Right lobe of liver (tissue), 6 donors: ENCODE measurements at regions of chr7 and their contacts with region 1.

Region 1: GRCh38 chr7:37510043-37510634 is 61.5 kb upstream of the ELMO1 start:
- DNase-seq: no peak
- ATAC-seq: peak; percentile 75 to 82 (median 79)
- H3K4me3 ChIP-seq: no peak overlapping the region
- H3K27ac ChIP-seq: no peak overlapping the region
- H3K4me1 ChIP-seq: no peaks in the 10 kb centered on the region
- H3K27me3 ChIP-seq: no peaks in the 10 kb centered on the region
- CTCF ChIP-seq: peak; percentile 68 to 80 (median 78)
- POLR2A ChIP-seq: no peak

Region 2: GRCh38 chr7:37131855-37132254 is 378.3 kb before region 1 on chr7:
- intact Hi-C with region 1: no loop called
- DNase-seq: no peak
- ATAC-seq: peak in 1 of 4 donors; percentile 69
- H3K4me3 ChIP-seq: no peak overlapping the region
- H3K27ac ChIP-seq: no peak overlapping the region
- H3K4me1 ChIP-seq: peaks cover 0 to 11% (median 4%) of the 10 kb centered on the region in 4 donors
- H3K27me3 ChIP-seq: no peaks in the 10 kb centered on the region
- CTCF ChIP-seq: no peak
- POLR2A ChIP-seq: no peak

Region 3: GRCh38 chr7:37284805-37285231 is 225.3 kb before region 1 on chr7:
- intact Hi-C with region 1: loop called in 1 of 2 experiments (anchors 10 kb)
- DNase-seq: peak; percentile 47 to 73 (median 62)
- ATAC-seq: peak; percentile 80 to 89 (median 84)
- H3K4me3 ChIP-seq: no peak overlapping the region
- H3K27ac ChIP-seq: no peak overlapping the region
- H3K4me1 ChIP-seq: peaks cover 0 to 27% (median 9%) of the 10 kb centered on the region in 4 donors
- H3K27me3 ChIP-seq: no peaks in the 10 kb centered on the region
- CTCF ChIP-seq: peak; percentile 81 to 94 (median 88)
- POLR2A ChIP-seq: no peak

Region 4: GRCh38 chr7:37448636-37449361 is 61.3 kb before region 1 on chr7 and contains the start of gene ELMO1:
- intact Hi-C with region 1: no loop called
- DNase-seq: peak; percentile 83 to 89 (median 87)
- ATAC-seq: peak; percentile 75 to 89 (median 82)
- H3K4me3 ChIP-seq: peak within 1 kb of the TSS; percentile 81 to 89 (median 86)
- H3K27ac ChIP-seq: peak within 1 kb of the TSS; percentile 81 to 98 (median 97)
- H3K4me1 ChIP-seq: peaks cover 0 to 23% (median 4%) of the 10 kb centered on the region in 4 donors
- H3K27me3 ChIP-seq: no peaks in the 10 kb centered on the region
- CTCF ChIP-seq: peak; percentile 35 to 67 (median 44)
- POLR2A ChIP-seq: peak; percentile 81
- total RNA-seq, gene ELMO1: 18.4 to 55.4 (median 25.1) TPM

Region 5: GRCh38 chr7:37635346-37635745 is 125.2 kb after region 1 on chr7:
- intact Hi-C with region 1: no loop called
- DNase-seq: no peak
- ATAC-seq: no peak
- H3K4me3 ChIP-seq: no peak overlapping the region
- H3K27ac ChIP-seq: no peak overlapping the region
- H3K4me1 ChIP-seq: no peaks in the 10 kb centered on the region
- H3K27me3 ChIP-seq: no peaks in the 10 kb centered on the region
- CTCF ChIP-seq: no peak
- POLR2A ChIP-seq: no peak

Region 6: GRCh38 chr7:37732253-37732652 is 222.1 kb after region 1 on chr7:
- intact Hi-C with region 1: no loop called
- DNase-seq: no peak
- ATAC-seq: peak; percentile 54 to 92 (median 70)
- H3K4me3 ChIP-seq: no peak overlapping the region
- H3K27ac ChIP-seq: no peak overlapping the region
- H3K4me1 ChIP-seq: peaks cover 0 to 4% (median 0%) of the 10 kb centered on the region in 4 donors
- H3K27me3 ChIP-seq: no peaks in the 10 kb centered on the region
- CTCF ChIP-seq: peak; percentile 19 to 49 (median 34)
- POLR2A ChIP-seq: no peak